Activated CD4-positive, alpha-beta memory T cell treated with anti-CD3 and anti-CD28 coated beads, Interleukin-2, amount 10 ng/mL, durations not matched to agents 7 days and 5 days (primary cell): ENCODE measurements at regions of chr4 and their contacts with region 1.

Region 1: DNA sequence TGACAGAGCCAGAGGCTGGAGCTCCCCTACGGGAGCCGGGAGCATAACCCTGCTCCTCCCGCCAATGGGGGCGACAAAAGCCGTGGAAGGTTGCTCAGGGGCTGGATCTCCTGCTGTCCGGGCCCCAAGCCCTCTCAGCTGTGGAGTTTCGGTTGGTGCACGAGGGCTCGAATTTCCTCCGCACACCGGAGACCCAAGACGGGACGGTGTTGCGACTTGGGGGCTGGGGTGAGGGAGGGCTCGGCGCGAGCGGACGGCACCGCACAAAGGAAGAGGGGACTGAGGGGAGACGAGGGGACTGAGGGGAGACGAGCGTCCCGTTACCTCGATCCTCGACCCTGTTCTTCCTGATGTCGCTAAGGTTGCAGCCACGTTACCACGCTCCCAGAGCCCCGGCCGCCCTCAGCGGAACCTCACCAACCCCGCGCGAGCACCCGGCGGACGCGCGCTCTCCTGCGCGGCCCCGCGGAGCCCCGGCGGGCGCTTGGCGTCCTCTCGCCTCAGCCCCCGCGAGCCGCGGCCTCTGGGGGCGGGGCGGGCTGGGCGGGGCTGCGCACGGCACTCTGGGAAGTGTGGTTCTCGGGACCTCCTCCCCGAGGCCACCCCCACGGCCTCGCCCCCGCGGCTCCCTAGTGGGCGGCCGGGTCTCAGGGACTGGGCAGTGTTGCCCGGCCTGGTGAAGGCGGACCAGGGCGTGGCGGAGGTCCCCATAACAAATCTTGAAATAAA is at the start of gene KLHL8:
- DNase-seq: peak; percentile 90
- H3K4me3 Mint-ChIP-seq: peak within 1 kb of the TSS; percentile 85
- H3K27ac Mint-ChIP-seq: peak within 1 kb of the TSS; percentile 85
- H3K4me1 Mint-ChIP-seq: peaks cover 16% of the 10 kb centered on the region
- H3K27me3 Mint-ChIP-seq: peaks cover 3% of the 10 kb centered on the region
- total RNA-seq, gene KLHL8: 9.1 to 9.8 TPM

Region 2: GRCh38 chr4:87209696-87210095 is 10.6 kb before region 1 on chr4:
- CTCF ChIA-PET with region 1: interaction called, 11 read pairs
- POLR2A ChIA-PET with region 1: interaction called, 5 read pairs
- DNase-seq: no peak
- H3K4me3 Mint-ChIP-seq: no peak overlapping the region
- H3K27ac Mint-ChIP-seq: no peak overlapping the region
- H3K4me1 Mint-ChIP-seq: peaks cover 1% of the 10 kb centered on the region
- H3K27me3 Mint-ChIP-seq: no peaks in the 10 kb centered on the region

Region 3: DNA sequence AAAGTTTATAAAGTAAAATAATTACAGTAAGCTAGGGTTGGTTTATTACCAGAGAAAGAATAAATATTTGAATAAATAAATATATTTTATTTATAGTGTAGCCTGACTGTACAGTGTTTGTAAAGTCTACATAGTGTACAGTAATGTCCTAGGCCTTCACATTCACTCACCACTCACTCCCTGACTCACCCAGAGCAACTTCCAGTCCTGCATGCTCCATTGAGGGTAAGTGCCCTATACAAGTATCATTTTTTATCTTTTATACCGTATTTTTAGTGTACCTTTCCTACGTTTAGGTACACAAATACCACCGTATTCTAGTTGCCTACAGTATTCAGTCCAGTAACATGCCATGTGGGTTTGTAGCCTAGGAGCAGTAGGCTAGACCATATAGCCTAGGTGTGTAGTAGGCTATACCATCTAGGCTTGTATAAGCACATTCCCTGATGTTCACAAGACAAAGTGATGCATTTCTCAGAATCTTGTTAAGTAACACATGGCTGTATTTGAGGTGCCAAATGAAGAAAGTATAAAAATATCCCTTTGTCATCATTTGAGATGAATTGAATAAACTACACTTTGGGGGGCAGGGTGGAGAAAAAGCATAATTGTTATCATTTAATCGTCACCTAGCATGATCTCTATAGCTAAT is 14.9 kb after region 1 on chr4:
- CTCF ChIA-PET with region 1: interaction called, 23 read pairs
- POLR2A ChIA-PET with region 1: interaction called, 6 read pairs
- DNase-seq: no peak
- H3K4me3 Mint-ChIP-seq: no peak overlapping the region
- H3K27ac Mint-ChIP-seq: no peak overlapping the region
- H3K4me1 Mint-ChIP-seq: peaks cover 3% of the 10 kb centered on the region
- H3K27me3 Mint-ChIP-seq: peaks cover 4% of the 10 kb centered on the region

Region 4: DNA sequence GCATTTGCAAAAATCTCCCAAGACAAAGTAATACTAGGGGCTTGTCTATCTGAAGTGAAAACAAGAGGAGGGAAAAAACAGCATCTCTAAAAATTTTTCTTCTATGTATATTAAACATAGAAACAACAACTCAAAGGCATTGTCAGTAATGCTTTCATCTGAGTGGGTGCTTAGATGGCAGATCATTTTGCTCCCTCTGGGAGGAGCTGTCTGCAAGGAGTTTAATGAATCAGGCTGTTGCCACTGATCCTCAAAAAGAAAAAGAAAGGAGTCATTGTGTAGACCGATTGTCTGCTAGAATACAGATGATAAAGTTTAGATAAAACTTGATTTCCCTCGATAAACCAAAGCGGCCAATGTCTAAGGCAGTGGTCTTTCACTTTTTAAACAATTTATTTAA is 49.9 kb after region 1 on chr4:
- CTCF ChIA-PET with region 1: no interaction called
- POLR2A ChIA-PET with region 1: no interaction called
- DNase-seq: no peak
- H3K4me3 Mint-ChIP-seq: no peak overlapping the region
- H3K27ac Mint-ChIP-seq: no peak overlapping the region
- H3K4me1 Mint-ChIP-seq: no peaks in the 10 kb centered on the region
- H3K27me3 Mint-ChIP-seq: peaks cover 11% of the 10 kb centered on the region